B cell (primary cell): ENCODE measurements at regions of chr22 and their contacts with region 1.

Region 1: GRCh38 chr22:28800308-28801077 is at the start of gene XBP1:
- DNase-seq: peak; percentile 94
- ATAC-seq: peak; percentile 97
- H3K4me3 ChIP-seq: peak within 1 kb of the TSS; percentile 71 to 98 (median 91)
- H3K4me3 Mint-ChIP-seq: peak within 1 kb of the TSS; percentile 98
- H3K27ac ChIP-seq: peak within 1 kb of the TSS; percentile 63 to 96
- H3K27ac Mint-ChIP-seq: peak within 1 kb of the TSS; percentile 96
- H3K4me1 ChIP-seq: peaks cover 27 to 40% of the 10 kb centered on the region in 2 donors
- H3K4me1 Mint-ChIP-seq: peaks cover 51% of the 10 kb centered on the region
- H3K27me3 ChIP-seq: no peaks in the 10 kb centered on the region
- H3K27me3 Mint-ChIP-seq: no peaks in the 10 kb centered on the region
- CTCF ChIP-seq: no peak
- total RNA-seq, gene XBP1: 16.8 and 18.2 TPM in 2 replicates

Region 2: DNA sequence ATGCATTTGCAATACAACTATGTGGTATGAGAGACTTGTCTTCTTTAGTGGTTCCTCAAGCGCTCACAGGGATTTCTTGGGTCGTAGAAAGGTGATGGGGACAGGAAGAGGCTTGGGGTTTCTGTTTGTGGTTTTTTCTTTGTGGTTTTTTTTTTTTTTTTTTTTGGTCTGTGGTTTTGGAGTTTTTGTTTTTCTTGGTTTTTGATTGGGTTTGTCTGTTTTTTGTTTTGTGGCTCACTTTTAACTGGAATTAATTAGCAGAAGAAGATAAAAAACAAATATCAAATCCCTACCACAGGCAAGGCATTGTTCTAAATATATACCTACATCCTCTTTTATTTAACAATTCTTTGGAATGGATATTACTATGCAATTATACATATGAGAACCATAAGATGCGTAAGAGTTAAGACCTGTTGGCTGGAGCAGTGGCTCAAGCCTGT is 126.4 kb before region 1 on chr22:
- CTCF ChIA-PET with region 1: no interaction called
- POLR2A ChIA-PET with region 1: no interaction called
- intact Hi-C with region 1: loop called (anchors 1 kb)
- DNase-seq: peak; percentile 75
- ATAC-seq: peak; percentile 88
- H3K4me3 ChIP-seq: no peak overlapping the region
- H3K4me3 Mint-ChIP-seq: peak overlapping the region; percentile 48
- H3K27ac ChIP-seq: no peak overlapping the region
- H3K27ac Mint-ChIP-seq: peak overlapping the region; percentile 90
- H3K4me1 ChIP-seq: peaks cover 22 to 26% of the 10 kb centered on the region in 2 donors
- H3K4me1 Mint-ChIP-seq: peaks cover 28% of the 10 kb centered on the region
- H3K27me3 ChIP-seq: peaks cover 3 to 43% (median 22%) of the 10 kb centered on the region in 4 experiments
- H3K27me3 Mint-ChIP-seq: peaks cover 38% of the 10 kb centered on the region
- CTCF ChIP-seq: no peak

Region 3: DNA sequence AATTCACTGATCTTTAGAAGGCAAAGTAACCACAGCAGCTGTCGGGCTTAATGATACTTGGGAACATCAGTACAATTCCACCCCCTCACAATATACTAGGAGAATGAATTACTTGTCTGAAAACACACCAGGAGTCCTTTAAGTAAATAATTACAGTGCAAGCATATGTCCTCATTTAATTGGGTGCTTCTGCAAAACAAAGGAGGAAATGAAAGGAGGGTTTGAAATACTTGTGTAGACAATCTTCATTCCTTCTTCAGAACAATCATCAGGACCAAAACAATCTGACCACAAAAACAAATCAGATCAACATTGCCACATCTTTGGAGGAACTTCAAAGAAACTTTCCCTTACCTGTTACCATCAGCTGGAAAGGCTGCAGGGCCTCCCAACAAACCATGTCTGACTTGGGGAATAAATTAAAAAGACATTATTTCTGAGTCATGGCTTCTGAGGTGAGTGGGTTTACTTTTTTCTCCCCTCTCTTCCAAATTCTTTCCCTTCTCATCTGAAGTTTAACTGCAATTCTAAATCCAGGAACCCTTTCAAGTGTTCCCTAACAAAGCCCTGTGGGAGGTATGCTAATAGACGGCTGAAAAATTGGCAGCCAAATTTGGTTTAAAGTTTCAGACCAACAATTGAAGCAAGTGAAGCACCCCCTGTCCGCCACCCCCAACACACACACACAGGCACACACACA is 40.5 kb before region 1 on chr22:
- CTCF ChIA-PET with region 1: no interaction called
- POLR2A ChIA-PET with region 1: no interaction called
- intact Hi-C with region 1: no loop called
- DNase-seq: peak; percentile 17
- ATAC-seq: no peak
- H3K4me3 ChIP-seq: peak overlapping the region in 3 of 5 experiments; percentile 21 to 51 (median 37)
- H3K4me3 Mint-ChIP-seq: peak overlapping the region; percentile 80
- H3K27ac ChIP-seq: peak overlapping the region; percentile 7 to 10
- H3K27ac Mint-ChIP-seq: peak overlapping the region; percentile 81
- H3K4me1 ChIP-seq: peaks cover 15 to 18% of the 10 kb centered on the region in 2 donors
- H3K4me1 Mint-ChIP-seq: peaks cover 18% of the 10 kb centered on the region
- H3K27me3 ChIP-seq: no peaks in the 10 kb centered on the region
- H3K27me3 Mint-ChIP-seq: no peaks in the 10 kb centered on the region
- CTCF ChIP-seq: no peak

Region 4: GRCh38 chr22:28772633-28773460 is 27.6 kb before region 1 on chr22 and contains the start of gene CCDC117:
- CTCF ChIA-PET with region 1: interaction called, 4 read pairs
- POLR2A ChIA-PET with region 1: interaction called, 3 read pairs
- intact Hi-C with region 1: loop called (anchors 1 kb)
- DNase-seq: peak; percentile 94
- ATAC-seq: peak; percentile 90
- H3K4me3 ChIP-seq: peak within 1 kb of the TSS; percentile 68 to 93 (median 75)
- H3K4me3 Mint-ChIP-seq: peak within 1 kb of the TSS; percentile 94
- H3K27ac ChIP-seq: peak within 1 kb of the TSS; percentile 80 to 95
- H3K27ac Mint-ChIP-seq: peak within 1 kb of the TSS; percentile 97
- H3K4me1 ChIP-seq: peaks cover 19 to 24% of the 10 kb centered on the region in 2 donors
- H3K4me1 Mint-ChIP-seq: peaks cover 19% of the 10 kb centered on the region
- H3K27me3 ChIP-seq: no peaks in the 10 kb centered on the region
- H3K27me3 Mint-ChIP-seq: no peaks in the 10 kb centered on the region
- CTCF ChIP-seq: peak; percentile 24
- total RNA-seq, gene CCDC117: 25.6 and 25.8 TPM in 2 replicates

Region 5: DNA sequence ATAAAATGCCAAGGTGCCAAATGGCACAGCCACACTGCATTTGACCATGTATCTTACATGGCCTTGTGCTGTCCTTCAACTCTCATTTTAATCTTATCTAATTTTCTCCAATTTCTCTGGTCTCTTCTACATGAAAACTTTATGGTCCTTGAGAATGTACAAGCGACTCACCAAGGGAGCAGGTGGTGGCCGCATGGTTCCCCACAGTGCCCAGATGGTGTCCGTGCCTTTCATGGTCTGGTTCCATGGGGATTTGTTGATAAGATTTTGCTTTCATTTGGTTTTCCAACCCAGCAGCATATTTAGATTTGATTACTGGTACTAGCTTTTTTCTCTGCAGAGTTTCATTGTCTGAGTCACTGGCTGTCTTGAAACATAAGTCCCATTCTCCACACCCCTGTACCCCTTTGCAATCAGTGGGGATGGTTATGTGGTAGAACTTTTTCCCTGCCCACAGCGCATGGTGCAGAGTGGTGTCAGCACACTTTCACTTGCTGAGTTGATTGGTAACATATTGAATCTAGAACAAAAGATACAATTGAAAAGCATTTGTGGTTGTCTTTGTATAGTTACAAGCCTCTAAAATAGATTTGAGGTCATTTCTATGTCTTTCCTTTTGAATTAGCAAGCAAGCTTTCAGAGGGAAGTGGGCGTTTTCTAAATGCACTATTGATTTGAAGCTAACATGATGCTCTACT is 107.0 kb after region 1 on chr22:
- CTCF ChIA-PET with region 1: no interaction called
- POLR2A ChIA-PET with region 1: no interaction called
- intact Hi-C with region 1: no loop called
- DNase-seq: no peak
- ATAC-seq: no peak
- H3K4me3 ChIP-seq: no peak overlapping the region
- H3K4me3 Mint-ChIP-seq: no peak overlapping the region
- H3K27ac ChIP-seq: no peak overlapping the region
- H3K27ac Mint-ChIP-seq: no peak overlapping the region
- H3K4me1 ChIP-seq: no peaks in the 10 kb centered on the region
- H3K4me1 Mint-ChIP-seq: no peaks in the 10 kb centered on the region
- H3K27me3 ChIP-seq: peaks cover 0 to 9% (median 0%) of the 10 kb centered on the region in 4 experiments
- H3K27me3 Mint-ChIP-seq: peaks cover 14% of the 10 kb centered on the region
- CTCF ChIP-seq: no peak